ENCODE measurements at regions of chr19 and their contacts with region 1.

Region 1: DNA sequence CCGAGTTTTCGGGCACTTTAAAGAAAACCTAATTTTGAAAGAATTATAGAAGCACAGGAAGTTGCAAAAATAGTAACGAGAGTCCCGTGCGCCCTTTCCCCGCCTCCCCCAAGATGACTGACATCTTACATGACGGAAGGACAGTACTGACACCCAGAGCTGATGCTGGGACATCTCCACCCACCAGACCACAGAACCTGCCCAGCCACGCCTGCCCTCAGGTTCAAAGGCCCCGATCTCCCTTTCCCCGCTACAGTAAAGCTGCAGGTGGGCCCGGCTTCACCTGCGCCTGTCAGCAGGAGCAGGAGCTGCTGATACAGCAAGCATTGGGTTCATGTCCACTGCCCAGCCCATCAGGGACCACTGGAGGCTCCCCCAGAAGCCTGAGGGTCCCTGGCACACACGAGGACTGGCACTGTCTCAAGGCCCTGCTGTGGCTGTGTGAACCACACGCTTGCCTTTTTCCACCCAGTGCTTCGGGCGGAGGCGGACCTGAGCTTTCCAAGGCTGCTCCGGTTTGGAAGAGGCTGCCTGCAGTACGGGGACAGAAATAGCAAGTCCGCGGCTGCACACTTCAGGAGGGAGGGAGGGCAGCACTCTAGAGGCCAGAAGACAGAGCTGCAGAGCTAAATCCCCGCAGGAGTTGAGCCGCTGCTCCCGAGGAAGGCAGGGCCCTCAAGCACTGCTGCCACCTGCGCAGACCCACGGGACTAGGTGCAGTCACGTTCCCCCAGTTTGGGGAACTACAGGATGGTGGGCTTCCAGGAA is 8.7 kb downstream of the MAP2K2 start:
- DNase-seq: no peak
- ATAC-seq: peak; percentile 51 to 87 (median 80)
- H3K4me3 ChIP-seq: peak overlapping the region; percentile 1
- H3K27ac ChIP-seq: peak overlapping the region; percentile 55
- H3K4me1 ChIP-seq: peaks cover 10% of the 10 kb centered on the region
- H3K27me3 ChIP-seq: no peaks in the 10 kb centered on the region
- CTCF ChIP-seq: no peak

Region 2: DNA sequence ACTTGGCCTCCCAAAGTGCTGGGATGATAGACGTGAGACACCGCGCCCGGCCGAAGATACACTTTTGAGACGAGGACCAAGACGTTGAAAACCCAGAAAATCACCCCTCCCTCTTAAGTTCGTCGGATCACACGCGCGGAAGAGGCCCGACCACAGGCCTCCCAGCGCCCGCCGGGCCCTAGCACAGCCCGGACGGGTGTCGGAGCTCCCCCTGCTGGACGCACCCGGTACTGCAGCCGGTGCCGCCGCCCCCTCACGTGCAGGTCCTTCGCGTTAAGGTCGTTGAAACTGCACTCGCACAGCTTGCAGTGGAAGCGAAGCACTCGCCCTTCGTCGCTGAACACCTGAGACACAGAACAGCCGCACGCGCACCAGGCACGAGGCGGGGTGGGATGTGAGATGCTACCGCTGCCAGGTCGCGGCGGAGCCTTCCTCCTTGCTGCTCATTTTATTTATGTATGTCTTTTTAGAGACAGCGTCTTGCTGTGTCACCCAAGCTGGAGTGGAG is 293.3 kb before region 1 on chr19:
- intact Hi-C with region 1: no loop called
- DNase-seq: peak; percentile 56 to 73
- ATAC-seq: peak; percentile 65 to 88 (median 79)
- H3K4me3 ChIP-seq: no peak overlapping the region
- H3K27ac ChIP-seq: no peak overlapping the region
- H3K4me1 ChIP-seq: no peaks in the 10 kb centered on the region
- H3K27me3 ChIP-seq: peaks cover 0 to 38% (median 12%) of the 10 kb centered on the region in 3 donors
- CTCF ChIP-seq: peak; percentile 98

Region 3: GRCh38 chr19:4007021-4007835 is 108.0 kb before region 1 on chr19 and contains the start of gene PIAS4:
- intact Hi-C with region 1: loop called in 1 of 2 experiments (anchors 5 kb)
- DNase-seq: peak; percentile 97 to 98
- ATAC-seq: peak; percentile 89 to 95 (median 92)
- H3K4me3 ChIP-seq: peak within 1 kb of the TSS; percentile 87
- H3K27ac ChIP-seq: peak within 1 kb of the TSS; percentile 91
- H3K4me1 ChIP-seq: peaks cover 34% of the 10 kb centered on the region
- H3K27me3 ChIP-seq: no peaks in the 10 kb centered on the region
- CTCF ChIP-seq: no peak
- total RNA-seq, gene PIAS4: 14.6 to 27.2 (median 17.0) TPM

Measured in psoas muscle (tissue), 8 donors.